GM18951 (cell line): ENCODE measurements at regions of chr11 and their contacts with region 1.

Region 1: GRCh38 chr11:44627911-44628729 is 62.7 kb downstream of the CD82 start:
- POLR2A ChIP-seq: no peak

Region 2: GRCh38 chr11:44178381-44178780 is 449.7 kb before region 1 on chr11:
- in situ Hi-C with region 1: no loop called
- POLR2A ChIP-seq: no peak

Region 3: DNA sequence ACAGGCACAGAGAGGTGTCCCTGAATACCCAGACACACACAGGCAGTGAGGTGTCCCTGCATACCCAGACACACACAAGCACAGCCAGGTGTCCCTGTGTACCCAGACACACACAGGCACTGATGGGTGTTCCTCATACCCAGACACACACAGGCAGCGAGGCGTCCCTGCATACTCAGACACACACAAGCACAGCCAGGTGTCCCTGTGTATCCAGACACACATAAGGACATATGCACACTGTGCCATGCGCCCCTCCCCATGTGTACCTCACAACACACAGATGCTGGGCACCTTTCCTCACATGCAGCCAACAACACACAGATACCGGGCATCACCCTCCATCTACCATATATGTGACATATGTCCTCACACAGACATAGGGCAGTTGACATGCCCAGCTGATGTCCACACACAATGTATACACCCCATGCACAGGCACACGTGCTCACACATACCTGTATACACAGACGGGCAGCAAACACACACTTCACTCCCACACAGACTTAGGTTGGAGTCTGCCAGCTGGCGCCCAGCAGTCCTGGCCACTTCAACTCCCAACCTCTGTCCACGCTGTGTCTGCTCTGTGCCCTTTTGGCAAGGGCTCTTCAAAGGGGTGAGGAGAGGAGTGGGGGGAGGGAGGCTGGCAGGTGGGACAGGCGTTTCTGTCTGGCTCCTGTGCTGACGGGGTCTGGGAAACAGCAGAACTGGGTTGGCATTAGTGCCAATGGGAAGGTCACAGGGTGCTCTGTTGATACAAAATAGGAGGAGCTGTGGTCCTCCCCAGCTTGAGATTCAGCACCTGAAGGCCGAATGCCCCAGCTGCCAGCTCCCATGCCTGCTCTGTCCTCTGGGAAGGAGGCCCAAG is 248.7 kb before region 1 on chr11:
- in situ Hi-C with region 1: no loop called
- POLR2A ChIP-seq: no peak

Region 4: GRCh38 chr11:44893846-44894617 is 265.9 kb after region 1 on chr11:
- in situ Hi-C with region 1: loop called (anchors 25 kb)
- POLR2A ChIP-seq: no peak

Region 5: DNA sequence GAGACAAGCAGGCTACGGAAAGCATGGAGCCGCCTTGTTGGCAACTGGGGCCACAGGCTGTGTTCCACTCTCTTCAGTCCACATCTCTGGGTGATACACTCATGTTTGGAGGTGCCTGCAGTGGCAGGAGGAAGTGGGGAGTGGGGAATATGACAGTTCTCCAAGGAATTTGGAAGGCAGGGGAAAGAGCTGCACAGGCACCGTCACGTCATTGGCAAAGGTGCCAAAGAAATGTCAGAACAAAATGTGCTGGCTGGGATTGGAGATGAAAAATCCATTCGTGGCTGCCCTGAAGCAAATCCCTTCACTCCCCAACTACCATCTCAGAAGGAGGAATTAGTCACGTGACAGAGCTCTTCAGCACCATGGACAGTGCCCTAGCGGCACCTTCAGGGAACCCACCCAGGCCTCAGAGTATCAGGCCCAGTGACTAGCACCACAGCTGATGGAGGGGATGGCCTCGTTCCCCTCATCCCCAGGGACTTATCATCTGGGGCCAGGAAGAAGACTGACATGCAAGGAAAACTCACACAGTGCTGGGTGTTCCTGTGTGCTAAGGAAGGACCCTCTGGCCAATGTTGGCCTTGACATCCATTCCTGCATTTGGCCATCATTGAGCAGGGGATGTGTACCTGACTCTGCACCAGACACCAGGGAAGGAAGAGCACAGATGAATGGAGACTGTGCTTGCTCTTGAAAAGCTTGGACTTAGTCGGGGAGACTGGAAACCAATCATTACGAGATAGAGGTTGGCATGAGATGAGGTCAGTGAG is 469.8 kb after region 1 on chr11:
- in situ Hi-C with region 1: no loop called
- POLR2A ChIP-seq: no peak